OCI-LY7 (cell line): ENCODE measurements at regions of chr14 and their contacts with region 1.

Region 1: GRCh38 chr14:58107947-58108552 is 44.0 kb downstream of the ARMH4 start:
- DNase-seq: peak; percentile 56
- H3K4me3 ChIP-seq: no peak overlapping the region
- H3K27ac ChIP-seq: no peak overlapping the region
- H3K4me1 ChIP-seq: no peaks in the 10 kb centered on the region
- CTCF ChIP-seq: peak; percentile 92

Region 2: DNA sequence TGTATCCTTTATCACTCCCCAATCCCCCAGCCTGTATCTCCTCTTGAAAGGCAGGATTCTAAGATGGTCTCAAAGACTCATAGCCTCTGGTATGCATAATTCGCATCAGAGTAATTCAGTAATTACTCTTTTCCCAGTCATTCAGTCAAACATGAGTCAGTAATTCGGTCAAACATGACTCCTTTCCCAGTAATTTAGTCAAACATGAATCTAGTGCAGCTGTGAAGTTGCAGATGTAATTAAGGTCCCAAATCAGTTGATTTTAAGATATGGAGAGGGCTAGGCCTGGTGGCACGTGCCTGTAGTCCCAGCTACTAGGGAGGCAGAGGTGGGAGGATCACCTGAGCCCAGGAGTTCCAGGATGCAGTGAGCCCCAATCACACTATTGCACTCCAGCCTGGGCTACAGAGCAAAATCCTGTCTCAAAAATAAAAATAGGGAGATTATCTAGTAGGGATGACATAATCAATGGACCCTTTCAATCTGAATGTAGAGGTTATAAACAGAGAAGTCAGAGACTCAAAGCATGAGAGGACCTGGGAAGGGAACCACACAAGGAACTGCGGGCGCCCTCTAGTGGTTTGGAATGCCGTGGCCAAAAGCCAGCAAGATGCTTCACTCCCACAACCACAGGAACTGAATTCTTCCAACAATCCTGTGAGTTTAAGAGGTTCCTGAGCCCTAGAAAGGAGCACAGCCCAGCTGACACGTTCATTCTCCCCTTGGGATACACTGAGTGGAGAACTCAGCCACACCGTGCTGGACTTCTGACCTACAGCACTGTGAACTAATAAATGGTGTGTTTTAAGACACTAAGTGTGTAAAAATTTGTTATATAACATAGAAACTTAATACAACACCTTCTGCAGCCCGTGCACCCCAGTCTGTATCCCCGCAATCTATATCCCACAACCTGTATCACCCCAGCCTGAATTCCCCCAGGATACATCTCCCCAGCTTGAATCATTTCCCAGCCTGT is 58.2 kb after region 1 on chr14:
- CTCF ChIA-PET with region 1: no interaction called
- POLR2A ChIA-PET with region 1: interaction called, 3 read pairs
- intact Hi-C with region 1: loop called (anchors 1 kb)
- DNase-seq: peak; percentile 74
- H3K4me3 ChIP-seq: no peak overlapping the region
- H3K27ac ChIP-seq: no peak overlapping the region
- H3K4me1 ChIP-seq: no peaks in the 10 kb centered on the region
- CTCF ChIP-seq: peak; percentile 99